H1 (cell line): ENCODE measurements at regions of chr16 and their contacts with region 1.

Region 1: GRCh38 chr16:15949210-15950160 is at the start of gene ABCC1:
- DNase-seq: peak in 1 of 2 experiments; percentile 68
- H3K4me3 ChIP-seq: peak within 1 kb of the TSS; percentile 58 to 89 (median 80)
- H3K27ac ChIP-seq: peak within 1 kb of the TSS; percentile 51
- H3K4me1 ChIP-seq: peaks cover 0 to 7% (median 1%) of the 10 kb centered on the region in 4 experiments; a peak in 2 of 7 replicates
- H3K27me3 ChIP-seq: no peaks in the 10 kb centered on the region
- CTCF ChIP-seq: peak in 1 of 3 experiments; percentile 25; a peak in 1 of 4 replicates
- EP300 ChIP-seq: no peak
- POLR2A ChIP-seq: no peak
- RAD21 ChIP-seq: peak in 1 of 2 experiments; percentile 22; a peak in 1 of 4 replicates
- total RNA-seq, gene ABCC1: 65.7 and 66.8 TPM in 2 replicates

Region 2: GRCh38 chr16:15961060-15961511 is 11.6 kb after region 1 on chr16:
- CTCF ChIA-PET with region 1: interaction called, 10 read pairs
- POLR2A ChIA-PET with region 1: interaction called, 10 read pairs
- DNase-seq: no peak
- H3K4me3 ChIP-seq: no peak overlapping the region
- H3K27ac ChIP-seq: no peak overlapping the region
- H3K4me1 ChIP-seq: peaks cover 3 to 16% (median 13%) of the 10 kb centered on the region in 4 experiments; a peak in 5 of 7 replicates
- H3K27me3 ChIP-seq: no peaks in the 10 kb centered on the region
- CTCF ChIP-seq: no peak
- EP300 ChIP-seq: no peak
- POLR2A ChIP-seq: no peak
- RAD21 ChIP-seq: no peak

Region 3: DNA sequence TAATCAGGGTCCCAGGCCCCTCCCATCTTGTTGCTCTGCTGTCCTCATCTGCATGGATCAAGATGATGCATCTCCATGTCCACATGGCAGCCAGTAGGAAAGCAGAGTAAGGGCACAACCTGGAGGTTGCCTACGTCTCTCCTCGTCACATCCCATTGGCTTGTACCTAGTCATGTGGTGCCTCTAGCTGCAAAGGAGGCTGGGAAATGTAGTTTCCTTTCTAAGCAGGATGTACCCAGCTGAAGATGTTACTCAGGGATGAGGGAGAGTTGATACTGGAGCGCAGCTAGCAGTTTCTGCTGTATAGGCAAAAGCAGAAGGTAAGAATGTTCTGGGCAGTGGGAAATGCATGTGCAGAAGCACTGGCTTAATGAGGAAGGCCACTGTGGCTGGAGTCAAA is 20.7 kb after region 1 on chr16:
- CTCF ChIA-PET with region 1: interaction called, 3 read pairs
- POLR2A ChIA-PET with region 1: interaction called, 13 read pairs
- DNase-seq: peak; percentile 41 to 59
- H3K4me3 ChIP-seq: no peak overlapping the region
- H3K27ac ChIP-seq: no peak overlapping the region
- H3K4me1 ChIP-seq: peaks cover 6 to 27% (median 18%) of the 10 kb centered on the region in 4 experiments
- H3K27me3 ChIP-seq: no peaks in the 10 kb centered on the region
- CTCF ChIP-seq: no peak
- EP300 ChIP-seq: no peak
- POLR2A ChIP-seq: no peak
- RAD21 ChIP-seq: no peak; a peak in 1 of 4 replicates

Region 4: DNA sequence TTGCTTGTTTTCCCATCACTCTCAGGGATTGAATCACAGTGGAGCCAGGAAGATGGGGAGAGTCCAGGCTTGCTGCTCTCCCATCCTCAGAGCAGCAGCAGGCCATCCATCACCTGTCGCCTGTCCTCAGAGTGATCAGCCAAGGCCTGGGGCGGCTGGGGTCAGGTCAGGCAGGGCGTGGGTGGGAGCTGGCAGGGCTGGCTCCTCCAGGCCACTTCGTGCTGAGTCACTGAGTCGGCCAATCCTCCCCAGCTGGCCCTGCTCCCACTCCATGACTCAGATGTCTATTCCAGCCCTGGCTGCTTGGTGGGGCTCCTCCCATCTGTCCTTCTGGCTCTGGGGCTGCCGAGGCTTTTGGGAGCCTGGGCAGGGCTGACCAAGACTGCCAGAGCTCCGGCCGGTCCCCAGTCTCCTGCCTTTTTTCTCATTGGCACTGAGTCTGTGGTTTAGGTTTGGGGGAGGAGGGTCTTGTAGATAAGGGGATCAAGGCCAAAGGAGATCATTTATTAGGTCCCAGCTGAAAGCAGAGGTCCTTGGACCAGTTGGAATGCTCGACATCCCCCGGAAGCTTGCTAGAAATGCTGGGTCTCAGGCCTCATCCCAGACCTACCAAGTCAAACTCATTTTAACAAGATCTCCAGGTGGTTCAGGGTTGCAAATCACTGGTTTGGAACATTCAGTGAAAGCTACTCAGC is 72.7 kb after region 1 on chr16:
- CTCF ChIA-PET with region 1: no interaction called
- POLR2A ChIA-PET with region 1: no interaction called
- DNase-seq: no peak
- H3K4me3 ChIP-seq: no peak overlapping the region
- H3K27ac ChIP-seq: peak overlapping the region; percentile 19; the same call in 1 of the 2 replicates
- H3K4me1 ChIP-seq: no peaks in the 10 kb centered on the region; a peak in 1 of 7 replicates
- H3K27me3 ChIP-seq: no peaks in the 10 kb centered on the region
- CTCF ChIP-seq: no peak
- EP300 ChIP-seq: no peak
- POLR2A ChIP-seq: no peak
- RAD21 ChIP-seq: no peak